Ascending aorta (tissue), 2 donors: ENCODE measurements at regions of chr7 and their contacts with region 1.

Region 1: GRCh38 chr7:143314127-143314526 is 1.8 kb upstream of the CLCN1 start:
- DNase-seq: no peak
- H3K4me3 ChIP-seq: no peak overlapping the region
- H3K27ac ChIP-seq: no peak overlapping the region
- H3K4me1 ChIP-seq: no peaks in the 10 kb centered on the region
- H3K27me3 ChIP-seq: no peaks in the 10 kb centered on the region
- CTCF ChIP-seq: no peak

Region 2: GRCh38 chr7:142626420-142627035 is 687.6 kb before region 1 on chr7:
- intact Hi-C with region 1: loop called (anchors 5 kb)
- DNase-seq: peak in 1 of 2 donors; percentile 67
- H3K4me3 ChIP-seq: no peak overlapping the region
- H3K27ac ChIP-seq: no peak overlapping the region
- H3K4me1 ChIP-seq: no peaks in the 10 kb centered on the region
- H3K27me3 ChIP-seq: no peaks in the 10 kb centered on the region
- CTCF ChIP-seq: peak in 2 of 3 experiments; percentile 28 to 49

Region 3: GRCh38 chr7:143265017-143265693 is 49.0 kb before region 1 on chr7:
- intact Hi-C with region 1: no loop called
- DNase-seq: no peak
- H3K4me3 ChIP-seq: no peak overlapping the region
- H3K27ac ChIP-seq: peak overlapping the region in 1 of 2 donors; percentile 76
- H3K4me1 ChIP-seq: peaks cover 4 to 9% of the 10 kb centered on the region in 2 donors
- H3K27me3 ChIP-seq: no peaks in the 10 kb centered on the region
- CTCF ChIP-seq: no peak